ENCODE measurements at regions of chr14 and their contacts with region 1.

Region 1: GRCh38 chr14:90758028-90758889 is 58.0 kb downstream of the TTC7B start:
- DNase-seq: peak; percentile 90 to 96
- ATAC-seq: peak; percentile 88 to 94 (median 92)
- H3K4me3 ChIP-seq: peak overlapping the region; percentile 39 to 66 (median 60)
- H3K27ac ChIP-seq: peak overlapping the region; percentile 91 to 98 (median 94)
- H3K4me1 ChIP-seq: peaks cover 4 to 34% (median 24%) of the 10 kb centered on the region in 9 donors
- H3K27me3 ChIP-seq: no peaks in the 10 kb centered on the region
- CTCF ChIP-seq: peak; percentile 70 to 98 (median 94)

Region 2: GRCh38 chr14:90383075-90383730 is 375.1 kb before region 1 on chr14:
- intact Hi-C with region 1: loop called in 3 of 10 experiments (anchors 2 to 5 kb)
- DNase-seq: peak; percentile 99 to 100
- ATAC-seq: peak; percentile 93 to 97 (median 97)
- H3K4me3 ChIP-seq: peak overlapping the region; percentile 44 to 75 (median 66)
- H3K27ac ChIP-seq: peak overlapping the region; percentile 95 to 100 (median 99)
- H3K4me1 ChIP-seq: peaks cover 6 to 49% (median 34%) of the 10 kb centered on the region in 9 donors
- H3K27me3 ChIP-seq: no peaks in the 10 kb centered on the region
- CTCF ChIP-seq: peak in 5 of 9 donors; percentile 8 to 33 (median 22)

Region 3: DNA sequence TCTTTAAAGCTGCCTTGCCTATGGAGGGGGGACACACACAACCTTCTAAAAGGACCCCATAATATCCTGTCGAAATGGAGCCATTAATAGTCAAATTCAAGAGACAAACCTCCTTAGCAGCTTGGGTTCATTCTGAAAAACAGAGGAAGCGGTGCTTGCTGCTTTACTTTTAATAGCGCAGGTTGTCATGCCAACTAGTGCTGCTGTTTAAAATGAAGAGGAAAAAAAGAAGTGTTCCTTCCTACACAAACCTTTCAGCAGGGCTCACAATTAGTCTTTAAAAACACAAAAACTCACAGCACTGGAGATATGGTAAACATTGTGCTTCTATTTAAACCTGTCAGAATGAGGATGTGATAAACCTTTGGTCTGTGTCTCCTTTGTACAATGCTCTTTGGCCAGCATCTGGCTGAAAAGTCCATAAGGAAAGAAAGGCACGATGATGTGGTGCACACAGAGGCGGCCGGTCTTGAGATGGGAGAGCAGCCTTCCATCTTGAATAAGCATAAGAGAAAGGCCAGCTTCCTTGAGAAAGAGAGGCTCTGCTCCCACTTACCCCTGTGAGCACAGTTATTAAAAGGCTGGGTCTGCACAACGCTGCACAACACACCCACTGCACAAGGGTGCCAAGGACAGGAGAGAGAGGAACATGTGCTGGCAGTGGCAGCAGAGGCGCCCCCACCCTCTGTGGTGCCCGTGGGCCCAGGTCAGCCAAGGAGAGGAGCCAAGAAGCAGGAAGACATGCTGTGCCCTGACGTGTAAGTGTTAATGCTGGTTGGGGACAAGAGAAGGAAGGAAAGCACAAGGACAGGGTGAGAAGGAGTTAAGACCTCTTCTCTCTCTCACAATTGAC is 86.7 kb before region 1 on chr14:
- intact Hi-C with region 1: no loop called
- DNase-seq: no peak
- ATAC-seq: peak in 6 of 8 donors; percentile 31 to 80 (median 46)
- H3K4me3 ChIP-seq: no peak overlapping the region
- H3K27ac ChIP-seq: peak overlapping the region in 1 of 10 donors; percentile 0
- H3K4me1 ChIP-seq: peaks cover 0 to 42% (median 22%) of the 10 kb centered on the region in 9 donors
- H3K27me3 ChIP-seq: no peaks in the 10 kb centered on the region
- CTCF ChIP-seq: no peak

Region 4: DNA sequence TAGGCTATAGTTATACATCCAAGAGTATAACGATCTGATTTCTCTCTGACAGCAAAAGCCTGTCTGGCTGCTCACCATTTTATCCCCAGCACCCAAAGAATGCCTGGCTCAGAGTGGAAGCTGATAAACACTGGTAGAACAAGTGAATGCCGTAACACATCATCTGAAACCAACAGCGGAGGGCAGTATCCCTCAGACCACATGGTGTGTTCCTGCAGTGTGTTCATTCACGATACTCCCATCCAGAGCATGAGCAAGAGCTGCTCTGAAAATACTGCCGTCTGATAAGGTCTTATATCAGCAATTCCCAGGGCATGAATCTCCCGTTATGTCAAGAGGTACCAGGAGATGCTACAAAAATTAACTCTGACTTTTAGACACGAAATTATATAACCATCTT is 37.9 kb before region 1 on chr14:
- intact Hi-C with region 1: loop called in 1 of 10 experiments (anchors 1 kb)
- DNase-seq: peak in 1 of 2 donors; percentile 29
- ATAC-seq: peak; percentile 69 to 93 (median 80)
- H3K4me3 ChIP-seq: no peak overlapping the region
- H3K27ac ChIP-seq: peak overlapping the region in 1 of 10 donors; percentile 34
- H3K4me1 ChIP-seq: peaks cover 0 to 35% (median 17%) of the 10 kb centered on the region in 9 donors
- H3K27me3 ChIP-seq: no peaks in the 10 kb centered on the region
- CTCF ChIP-seq: peak in 4 of 9 donors; percentile 14 to 44 (median 26)

Region 5: GRCh38 chr14:90815822-90816700 is 57.8 kb after region 1 on chr14 and contains the start of gene TTC7B:
- intact Hi-C with region 1: loop called in 4 of 10 experiments (anchors 2 to 5 kb)
- DNase-seq: peak in 1 of 2 donors; percentile 65
- ATAC-seq: peak; percentile 69 to 85 (median 78)
- H3K4me3 ChIP-seq: peak within 1 kb of the TSS; percentile 63 to 91 (median 77)
- H3K27ac ChIP-seq: peak within 1 kb of the TSS in 6 of 10 donors; percentile 30 to 58 (median 50)
- H3K4me1 ChIP-seq: peaks cover 3 to 35% (median 18%) of the 10 kb centered on the region in 9 donors
- H3K27me3 ChIP-seq: no peaks in the 10 kb centered on the region
- CTCF ChIP-seq: peak in 8 of 9 donors; percentile 5 to 42 (median 24)
- total RNA-seq, gene TTC7B: 59.1 to 79.4 (median 66.6) TPM